CD4-positive, alpha-beta T cell (primary cell): ENCODE measurements at regions of chr11 and their contacts with region 1.

Region 1: GRCh38 chr11:76680518-76681425 is 10.2 kb upstream of the LRRC32 start:
- DNase-seq: peak; percentile 23 to 73 (median 40)
- ATAC-seq: peak; percentile 52
- H3K4me3 ChIP-seq: no peak overlapping the region
- H3K4me3 Mint-ChIP-seq: no peak overlapping the region
- H3K27ac ChIP-seq: no peak overlapping the region
- H3K27ac Mint-ChIP-seq: no peak overlapping the region
- H3K4me1 ChIP-seq: peaks cover 8% of the 10 kb centered on the region
- H3K4me1 Mint-ChIP-seq: no peaks in the 10 kb centered on the region
- H3K27me3 ChIP-seq: no peaks in the 10 kb centered on the region
- H3K27me3 Mint-ChIP-seq: peaks cover 5% of the 10 kb centered on the region
- CTCF ChIP-seq: peak; percentile 58

Region 2: DNA sequence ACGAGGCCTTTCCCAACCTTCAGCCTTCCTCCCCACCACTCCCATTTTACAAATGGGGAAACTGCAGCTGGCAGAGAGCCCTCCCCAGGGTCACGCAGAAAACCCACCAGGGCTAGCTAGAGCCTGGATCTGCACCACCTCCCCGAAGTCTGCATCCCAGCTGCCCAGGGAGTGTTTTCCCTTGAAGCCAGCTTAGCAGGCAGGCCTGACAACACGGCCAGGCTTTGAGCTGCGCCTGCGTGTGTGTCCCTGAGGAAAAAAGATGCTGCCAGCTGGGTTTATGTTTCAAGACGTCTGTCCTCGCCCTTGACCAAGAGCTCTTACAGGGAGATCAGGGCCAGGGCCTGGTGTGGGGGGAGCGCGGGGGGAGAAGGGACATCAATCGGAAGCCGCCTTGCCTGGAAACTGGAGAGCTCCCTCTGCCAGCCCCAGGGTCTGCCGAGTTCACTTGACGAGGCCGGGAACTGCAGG is 494.8 kb before region 1 on chr11:
- CTCF ChIA-PET with region 1: no interaction called
- POLR2A ChIA-PET with region 1: no interaction called
- intact Hi-C with region 1: no loop called
- DNase-seq: no peak
- ATAC-seq: no peak
- H3K4me3 ChIP-seq: no peak overlapping the region
- H3K4me3 Mint-ChIP-seq: no peak overlapping the region
- H3K27ac ChIP-seq: no peak overlapping the region
- H3K27ac Mint-ChIP-seq: no peak overlapping the region
- H3K4me1 ChIP-seq: no peaks in the 10 kb centered on the region
- H3K4me1 Mint-ChIP-seq: no peaks in the 10 kb centered on the region
- H3K27me3 ChIP-seq: no peaks in the 10 kb centered on the region
- H3K27me3 Mint-ChIP-seq: no peaks in the 10 kb centered on the region
- CTCF ChIP-seq: no peak

Region 3: GRCh38 chr11:76551400-76551799 is 129.4 kb before region 1 on chr11:
- CTCF ChIA-PET with region 1: no interaction called
- POLR2A ChIA-PET with region 1: no interaction called
- intact Hi-C with region 1: loop called in 1 of 2 experiments (anchors 5 kb)
- DNase-seq: no peak
- ATAC-seq: no peak
- H3K4me3 ChIP-seq: no peak overlapping the region
- H3K4me3 Mint-ChIP-seq: no peak overlapping the region
- H3K27ac ChIP-seq: no peak overlapping the region
- H3K27ac Mint-ChIP-seq: no peak overlapping the region
- H3K4me1 ChIP-seq: no peaks in the 10 kb centered on the region
- H3K4me1 Mint-ChIP-seq: no peaks in the 10 kb centered on the region
- H3K27me3 ChIP-seq: no peaks in the 10 kb centered on the region
- H3K27me3 Mint-ChIP-seq: no peaks in the 10 kb centered on the region
- CTCF ChIP-seq: peak; percentile 16